Activated naive CD4-positive, alpha-beta T cell treated with anti-CD3 and anti-CD28 coated beads for 36 hours (primary cell): ENCODE measurements at regions of chr21 and their contacts with region 1.

Region 1: GRCh38 chr21:45140346-45140940 is 66.1 kb downstream of the ADARB1 start:
- DNase-seq: peak; percentile 78
- H3K4me3 Mint-ChIP-seq: no peak overlapping the region
- H3K27ac Mint-ChIP-seq: no peak overlapping the region
- H3K4me1 Mint-ChIP-seq: peaks cover 3% of the 10 kb centered on the region
- H3K27me3 Mint-ChIP-seq: no peaks in the 10 kb centered on the region

Region 2: DNA sequence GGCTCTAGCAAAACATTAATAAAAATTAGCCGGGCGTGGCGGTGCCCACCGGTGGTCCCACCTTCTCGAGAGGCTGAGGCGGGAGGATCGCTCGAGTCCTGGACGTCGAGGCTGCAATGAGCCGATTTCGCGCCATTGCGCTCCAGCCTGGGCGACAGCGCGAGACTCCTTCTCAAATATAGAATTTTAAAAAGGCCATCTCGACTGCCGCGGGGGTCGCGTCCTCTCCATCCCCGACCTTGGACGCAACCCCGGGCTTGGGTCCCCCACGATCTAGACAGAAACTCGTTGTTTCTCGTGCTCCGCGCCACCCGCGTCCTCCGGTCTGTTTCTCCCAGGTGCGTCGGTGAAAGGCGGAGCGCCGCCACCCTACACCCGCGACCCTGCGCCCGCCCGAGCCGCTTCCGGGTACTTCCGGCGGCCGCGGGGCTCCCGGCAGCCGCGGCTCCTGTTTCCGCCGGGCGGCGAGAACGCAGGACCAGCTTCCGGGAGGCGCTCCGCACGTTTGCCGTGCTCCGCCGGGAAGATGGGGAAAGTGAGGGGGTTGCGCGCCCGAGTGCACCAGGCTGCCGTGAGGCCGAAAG is 200.8 kb before region 1 on chr21 and contains the start of gene SLX9:
- CTCF ChIA-PET with region 1: interaction called, 82 read pairs
- intact Hi-C with region 1: no loop called
- DNase-seq: peak; percentile 83
- H3K4me3 Mint-ChIP-seq: peak within 1 kb of the TSS; percentile 80
- H3K27ac Mint-ChIP-seq: peak within 1 kb of the TSS; percentile 86
- H3K4me1 Mint-ChIP-seq: peaks cover 39% of the 10 kb centered on the region
- H3K27me3 Mint-ChIP-seq: no peaks in the 10 kb centered on the region
- total RNA-seq, gene SLX9: 61.8 to 63.4 TPM

Region 3: GRCh38 chr21:44962403-44962966 is 178.0 kb before region 1 on chr21:
- CTCF ChIA-PET with region 1: interaction called, 12 read pairs
- intact Hi-C with region 1: no loop called
- DNase-seq: no peak
- H3K4me3 Mint-ChIP-seq: no peak overlapping the region
- H3K27ac Mint-ChIP-seq: no peak overlapping the region
- H3K4me1 Mint-ChIP-seq: peaks cover 32% of the 10 kb centered on the region
- H3K27me3 Mint-ChIP-seq: no peaks in the 10 kb centered on the region

Region 4: GRCh38 chr21:45098867-45099266 is 41.6 kb before region 1 on chr21:
- CTCF ChIA-PET with region 1: interaction called, 10 read pairs
- intact Hi-C with region 1: no loop called
- DNase-seq: no peak
- H3K4me3 Mint-ChIP-seq: no peak overlapping the region
- H3K27ac Mint-ChIP-seq: no peak overlapping the region
- H3K4me1 Mint-ChIP-seq: peaks cover 39% of the 10 kb centered on the region
- H3K27me3 Mint-ChIP-seq: no peaks in the 10 kb centered on the region

Region 5: GRCh38 chr21:45130324-45130774 is 10.1 kb before region 1 on chr21:
- CTCF ChIA-PET with region 1: interaction called, 112 read pairs
- intact Hi-C with region 1: no loop called
- DNase-seq: no peak
- H3K4me3 Mint-ChIP-seq: no peak overlapping the region
- H3K27ac Mint-ChIP-seq: no peak overlapping the region
- H3K4me1 Mint-ChIP-seq: peaks cover 32% of the 10 kb centered on the region
- H3K27me3 Mint-ChIP-seq: no peaks in the 10 kb centered on the region

Region 6: GRCh38 chr21:45287438-45288391 is 147.3 kb after region 1 on chr21 and contains the start of gene POFUT2:
- CTCF ChIA-PET with region 1: interaction called, 9 read pairs
- intact Hi-C with region 1: loop called (anchors 5 kb)
- DNase-seq: peak; percentile 98
- H3K4me3 Mint-ChIP-seq: peak within 1 kb of the TSS; percentile 76
- H3K27ac Mint-ChIP-seq: no peak within 1 kb of the TSS
- H3K4me1 Mint-ChIP-seq: peaks cover 13% of the 10 kb centered on the region
- H3K27me3 Mint-ChIP-seq: no peaks in the 10 kb centered on the region
- total RNA-seq, gene POFUT2: 14.4 to 15.9 TPM

Region 7: DNA sequence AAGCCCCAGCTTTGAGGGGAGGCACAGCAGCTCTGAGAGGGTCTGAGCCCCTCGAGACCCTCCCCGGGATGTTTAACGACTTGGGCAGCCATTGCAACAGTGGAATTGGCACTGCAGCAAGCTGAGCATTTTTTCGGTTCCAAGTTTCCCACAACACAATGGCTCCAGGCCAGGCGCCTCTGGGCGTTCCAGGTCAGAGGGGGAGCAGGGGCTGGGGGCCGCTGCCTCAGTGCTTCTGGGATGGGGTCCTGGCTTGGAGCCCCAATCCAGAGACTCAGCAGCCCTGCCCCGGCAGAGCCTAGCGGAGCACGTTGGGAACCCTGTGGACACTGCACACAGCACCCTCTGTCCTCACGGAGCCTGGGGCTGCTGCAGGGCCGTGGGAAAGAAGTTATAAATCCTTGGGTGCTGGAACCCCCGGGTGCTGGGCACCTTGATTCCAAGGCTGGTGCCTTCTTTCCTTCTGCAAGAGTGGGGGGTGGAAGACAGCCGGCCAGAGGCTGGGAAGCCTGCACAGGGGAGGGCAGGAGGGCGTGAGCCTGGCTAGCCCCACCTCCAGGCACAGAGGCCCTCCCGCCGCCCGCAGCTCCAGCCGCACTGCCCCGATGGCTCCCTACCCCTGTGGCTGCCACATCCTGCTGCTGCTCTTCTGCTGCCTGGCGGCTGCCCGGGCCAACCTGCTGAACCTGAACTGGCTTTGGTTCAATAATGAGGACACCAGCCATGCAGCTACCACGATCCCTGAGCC is 314.7 kb after region 1 on chr21:
- CTCF ChIA-PET with region 1: no interaction called
- intact Hi-C with region 1: no loop called
- DNase-seq: no peak
- H3K4me3 Mint-ChIP-seq: no peak overlapping the region
- H3K27ac Mint-ChIP-seq: no peak overlapping the region
- H3K4me1 Mint-ChIP-seq: no peaks in the 10 kb centered on the region
- H3K27me3 Mint-ChIP-seq: no peaks in the 10 kb centered on the region

Region 8: DNA sequence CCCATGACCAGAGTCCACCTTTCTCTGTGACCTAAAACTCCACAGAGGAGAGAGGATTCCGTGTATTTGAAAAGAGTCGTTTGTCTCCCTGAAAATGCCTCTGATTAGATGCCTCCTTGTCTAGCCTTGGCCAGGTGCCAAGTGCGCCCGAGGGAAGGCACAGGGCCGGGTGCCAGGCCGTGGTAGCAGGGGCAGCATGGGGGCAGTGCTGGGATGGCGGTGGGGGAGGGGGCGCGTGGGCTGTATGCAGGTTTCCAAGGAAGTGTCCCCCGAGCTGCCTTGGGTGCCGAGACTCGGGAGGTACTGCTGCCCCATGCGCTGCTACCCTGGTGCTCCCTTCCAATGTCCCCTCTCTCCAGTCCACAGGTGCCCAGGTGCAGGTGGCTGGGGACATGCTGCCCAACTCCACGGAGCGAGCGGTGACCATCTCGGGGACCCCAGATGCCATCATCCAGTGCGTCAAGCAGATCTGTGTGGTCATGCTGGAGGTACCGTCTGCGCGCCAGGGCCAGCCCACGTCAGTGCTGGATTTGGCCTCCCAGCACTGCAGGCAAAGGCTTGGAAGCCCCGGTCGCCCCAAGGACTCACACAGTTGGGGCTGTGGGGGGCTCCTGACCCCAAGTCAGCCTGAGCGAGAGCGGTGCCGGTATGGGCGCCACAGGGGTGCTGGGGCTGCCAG is 770.2 kb after region 1 on chr21:
- CTCF ChIA-PET with region 1: no interaction called
- intact Hi-C with region 1: no loop called
- DNase-seq: no peak
- H3K4me3 Mint-ChIP-seq: no peak overlapping the region
- H3K27ac Mint-ChIP-seq: no peak overlapping the region
- H3K4me1 Mint-ChIP-seq: peaks cover 2% of the 10 kb centered on the region
- H3K27me3 Mint-ChIP-seq: no peaks in the 10 kb centered on the region